ENCODE measurements at regions of chr13 and their contacts with region 1.

Region 1: GRCh38 chr13:109162248-109163053 is 533.0 kb downstream of the MYO16 start:
- DNase-seq: peak; percentile 84
- H3K4me3 Mint-ChIP-seq: no peak overlapping the region
- H3K27ac Mint-ChIP-seq: no peak overlapping the region
- H3K4me1 Mint-ChIP-seq: peaks cover 11% of the 10 kb centered on the region
- H3K27me3 Mint-ChIP-seq: peaks cover 39% of the 10 kb centered on the region

Region 2: GRCh38 chr13:108915634-108916512 is 246.6 kb before region 1 on chr13:
- CTCF ChIA-PET with region 1: no interaction called
- intact Hi-C with region 1: loop called (anchors 1 kb)
- DNase-seq: peak; percentile 98
- H3K4me3 Mint-ChIP-seq: peak overlapping the region; percentile 68
- H3K27ac Mint-ChIP-seq: peak overlapping the region; percentile 87
- H3K4me1 Mint-ChIP-seq: peaks cover 20% of the 10 kb centered on the region
- H3K27me3 Mint-ChIP-seq: peaks cover 8% of the 10 kb centered on the region

Region 3: DNA sequence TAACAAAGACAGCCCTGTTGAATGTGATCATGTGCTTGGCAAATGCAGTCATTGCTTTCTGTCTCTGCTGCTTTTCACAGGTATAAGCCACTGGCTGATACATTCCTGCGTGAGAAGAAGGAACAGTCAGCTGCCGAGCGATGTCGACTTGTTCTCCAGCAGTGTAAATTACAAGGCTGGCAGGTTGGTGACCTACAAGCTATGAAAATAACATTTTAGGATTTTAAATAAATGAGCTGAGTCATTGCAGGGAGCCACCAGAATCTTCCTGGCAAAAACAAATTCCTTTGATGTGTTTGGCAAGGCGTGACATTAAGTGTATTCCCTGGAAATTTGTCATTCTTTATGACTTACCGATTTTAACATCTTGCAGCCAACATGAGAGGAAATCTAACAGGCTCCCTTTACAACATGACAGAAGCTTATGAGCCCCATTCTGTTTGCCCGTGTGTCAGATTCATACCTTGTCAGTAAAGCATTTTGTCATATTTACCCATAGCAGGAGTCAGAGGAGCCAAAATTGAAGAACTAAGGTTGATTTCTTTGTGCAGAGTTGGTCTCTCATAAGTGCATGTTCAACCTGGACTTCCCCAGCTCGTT is 61.6 kb before region 1 on chr13:
- CTCF ChIA-PET with region 1: no interaction called
- intact Hi-C with region 1: no loop called
- DNase-seq: no peak
- H3K4me3 Mint-ChIP-seq: no peak overlapping the region
- H3K27ac Mint-ChIP-seq: no peak overlapping the region
- H3K4me1 Mint-ChIP-seq: no peaks in the 10 kb centered on the region
- H3K27me3 Mint-ChIP-seq: peaks cover 23% of the 10 kb centered on the region

Region 4: DNA sequence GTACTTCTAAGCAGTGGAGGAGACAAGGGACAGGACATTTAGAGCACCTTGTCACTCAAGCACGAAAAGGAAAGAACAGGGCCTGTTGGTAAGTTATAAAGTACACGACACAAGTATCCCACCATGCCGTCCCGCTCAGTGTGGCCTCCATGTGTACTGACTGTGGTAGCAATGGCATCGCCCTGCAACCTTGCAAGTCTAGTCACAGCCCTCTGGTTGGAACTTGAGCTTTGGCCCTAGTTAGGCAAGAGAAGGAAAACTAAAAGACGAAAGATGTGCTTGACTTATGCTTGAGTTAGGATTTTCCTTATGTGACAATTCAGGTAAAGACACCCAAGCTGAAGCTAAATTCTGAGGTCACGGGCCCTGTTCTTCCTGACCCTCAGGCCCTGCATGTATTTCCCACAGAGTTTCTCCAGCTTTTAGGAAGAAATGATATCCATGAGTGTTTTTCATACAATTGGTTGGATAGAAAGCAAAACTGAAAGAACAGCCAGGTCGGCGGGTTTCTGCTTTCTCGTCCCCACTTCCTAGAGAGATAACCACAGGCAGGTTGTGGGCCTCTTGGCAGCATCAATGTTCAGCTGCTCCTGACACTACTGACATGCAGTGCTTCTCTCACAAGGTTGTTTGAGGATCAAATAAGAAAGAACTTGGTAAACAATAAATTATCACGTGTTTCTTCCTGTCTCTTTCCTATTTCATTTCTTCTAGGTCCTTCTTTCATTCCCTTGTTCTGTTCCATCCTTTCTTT is 407.7 kb after region 1 on chr13:
- CTCF ChIA-PET with region 1: no interaction called
- intact Hi-C with region 1: loop called (anchors 2 kb)
- DNase-seq: peak; percentile 67
- H3K4me3 Mint-ChIP-seq: no peak overlapping the region
- H3K27ac Mint-ChIP-seq: no peak overlapping the region
- H3K4me1 Mint-ChIP-seq: peaks cover 11% of the 10 kb centered on the region
- H3K27me3 Mint-ChIP-seq: no peaks in the 10 kb centered on the region

Region 5: GRCh38 chr13:109778102-109778542 is 615.7 kb after region 1 on chr13:
- CTCF ChIA-PET with region 1: no interaction called
- intact Hi-C with region 1: loop called (anchors 2 kb)
- DNase-seq: peak; percentile 21
- H3K4me3 Mint-ChIP-seq: peak overlapping the region; percentile 27
- H3K27ac Mint-ChIP-seq: peak overlapping the region; percentile 24
- H3K4me1 Mint-ChIP-seq: peaks cover 59% of the 10 kb centered on the region
- H3K27me3 Mint-ChIP-seq: no peaks in the 10 kb centered on the region

Region 6: GRCh38 chr13:109840201-109840892 is 677.9 kb after region 1 on chr13:
- CTCF ChIA-PET with region 1: no interaction called
- intact Hi-C with region 1: loop called (anchors 1 kb)
- DNase-seq: peak; percentile 47
- H3K4me3 Mint-ChIP-seq: no peak overlapping the region
- H3K27ac Mint-ChIP-seq: peak overlapping the region; percentile 12
- H3K4me1 Mint-ChIP-seq: peaks cover 8% of the 10 kb centered on the region
- H3K27me3 Mint-ChIP-seq: peaks cover 40% of the 10 kb centered on the region

Region 7: DNA sequence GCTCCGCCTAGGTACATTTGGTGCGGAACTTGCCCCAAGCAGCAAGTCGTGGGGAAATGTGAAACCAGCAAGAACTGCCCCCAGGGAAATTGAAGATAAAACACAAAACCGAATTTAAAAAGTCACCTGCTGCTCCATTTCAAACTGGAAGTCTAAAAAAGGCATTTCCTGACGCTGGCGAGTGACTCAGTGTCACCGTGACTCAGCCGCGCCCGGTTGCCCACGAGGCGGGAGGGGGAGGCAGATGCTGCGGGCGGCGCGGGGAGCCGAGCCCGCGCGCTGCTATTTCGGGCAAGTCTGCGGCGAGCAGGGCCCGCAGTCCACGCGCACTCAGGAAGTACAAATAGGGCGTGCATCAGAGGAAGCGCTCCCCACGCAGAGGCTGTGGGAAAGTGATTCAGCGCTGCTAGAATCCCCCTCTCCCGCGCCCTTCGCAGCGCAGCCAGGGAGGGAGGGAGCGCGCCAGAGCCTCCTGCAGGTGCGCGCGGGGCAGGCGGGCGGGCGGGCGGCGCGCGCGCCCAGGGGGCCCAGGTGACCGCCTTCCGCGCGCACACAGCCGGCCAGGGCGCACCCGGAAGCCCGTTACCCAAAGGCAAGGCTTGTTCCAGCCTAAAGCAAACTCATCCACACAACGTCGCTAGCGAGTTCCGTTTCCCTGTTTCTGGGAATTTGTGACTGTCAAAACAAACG is 975.7 kb after region 1 on chr13:
- CTCF ChIA-PET with region 1: no interaction called
- intact Hi-C with region 1: loop called (anchors 1 kb)
- DNase-seq: peak; percentile 85
- H3K4me3 Mint-ChIP-seq: peak overlapping the region; percentile 73
- H3K27ac Mint-ChIP-seq: peak overlapping the region; percentile 59
- H3K4me1 Mint-ChIP-seq: peaks cover 9% of the 10 kb centered on the region
- H3K27me3 Mint-ChIP-seq: peaks cover 41% of the 10 kb centered on the region

Region 8: GRCh38 chr13:110421696-110422385 is 1259.4 kb after region 1 on chr13:
- CTCF ChIA-PET with region 1: no interaction called
- intact Hi-C with region 1: loop called (anchors 5 kb)
- DNase-seq: peak; percentile 51
- H3K4me3 Mint-ChIP-seq: no peak overlapping the region
- H3K27ac Mint-ChIP-seq: no peak overlapping the region
- H3K4me1 Mint-ChIP-seq: peaks cover 23% of the 10 kb centered on the region
- H3K27me3 Mint-ChIP-seq: peaks cover 87% of the 10 kb centered on the region